HEK293 (cell line): ENCODE measurements at regions of chr16 and their contacts with region 1.

Region 1: DNA sequence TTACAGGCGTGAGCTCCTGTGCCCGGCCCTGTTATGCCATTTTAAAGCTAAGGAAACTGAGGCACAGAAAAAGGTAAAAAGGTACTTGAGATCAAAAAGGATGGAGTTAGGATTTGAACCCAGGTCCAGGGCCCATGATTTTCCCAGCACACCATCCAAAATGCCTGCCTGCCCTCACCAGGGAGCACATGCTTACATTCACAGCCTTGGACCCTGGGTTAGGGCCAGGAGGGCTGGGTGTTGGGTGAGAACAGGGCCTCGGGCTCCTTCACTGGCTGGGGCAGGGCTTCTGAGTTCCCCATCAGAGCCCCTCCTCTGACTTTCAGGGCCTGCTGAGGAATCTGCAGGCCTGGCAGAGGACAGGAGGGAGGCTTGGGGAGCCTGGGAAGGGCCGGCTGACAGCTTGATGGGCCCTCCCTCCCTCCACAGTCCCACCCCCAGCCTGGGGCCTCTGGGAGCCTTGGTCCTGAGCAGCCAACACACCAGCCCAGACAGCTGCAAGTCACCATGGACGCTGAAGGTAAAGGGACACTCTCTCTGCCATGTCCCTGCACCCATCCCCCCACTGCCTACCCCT is at the start of gene QPRT:
- H3K4me3 ChIP-seq: no peak within 1 kb of the TSS
- H3K27ac ChIP-seq: peak within 1 kb of the TSS; percentile 73; the same call in 1 of the 2 replicates
- H3K4me1 ChIP-seq: peaks cover 3% of the 10 kb centered on the region; the same call in 1 of the 2 replicates
- CTCF ChIP-seq: no peak

Region 2: GRCh38 chr16:29694384-29695195 is 15.8 kb after region 1 on chr16:
- CTCF ChIA-PET with region 1: interaction called, 10 read pairs
- POLR2A ChIA-PET with region 1: no interaction called
- H3K4me3 ChIP-seq: no peak overlapping the region
- H3K27ac ChIP-seq: no peak overlapping the region
- H3K4me1 ChIP-seq: no peaks in the 10 kb centered on the region
- CTCF ChIP-seq: no peak